Activated naive CD4-positive, alpha-beta T cell treated with anti-CD3 and anti-CD28 coated beads for 36 hours (primary cell): ENCODE measurements at regions of chr6 and their contacts with region 1.

Region 1: DNA sequence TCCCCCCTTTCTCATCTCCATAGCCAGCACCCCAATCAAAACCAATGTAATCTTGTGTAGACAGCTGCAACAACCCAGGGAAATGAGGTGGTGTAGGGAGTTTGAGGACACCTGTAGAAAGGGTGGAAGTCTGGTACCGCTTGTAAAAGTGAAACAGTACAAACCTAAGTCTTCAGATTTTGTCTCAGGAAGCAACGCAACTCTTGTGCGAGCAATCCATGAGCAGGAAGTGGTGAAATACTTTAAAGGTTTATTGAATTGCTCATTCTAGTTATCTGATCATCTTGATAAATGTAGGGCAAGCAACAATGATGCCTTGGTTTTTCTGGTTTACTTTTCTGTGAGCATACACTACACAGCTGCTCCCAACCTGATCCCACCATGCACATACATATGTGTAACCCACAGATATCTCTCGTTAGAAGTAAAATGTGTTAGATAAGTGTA is 71.1 kb upstream of the THEMIS start:
- DNase-seq: peak; percentile 62
- H3K4me3 Mint-ChIP-seq: peak overlapping the region; percentile 72
- H3K27ac Mint-ChIP-seq: peak overlapping the region; percentile 88
- H3K4me1 Mint-ChIP-seq: peaks cover 63% of the 10 kb centered on the region
- H3K27me3 Mint-ChIP-seq: no peaks in the 10 kb centered on the region

Region 2: GRCh38 chr6:127630800-127631199 is 341.2 kb before region 1 on chr6:
- CTCF ChIA-PET with region 1: no interaction called
- intact Hi-C with region 1: no loop called
- DNase-seq: no peak
- H3K4me3 Mint-ChIP-seq: no peak overlapping the region
- H3K27ac Mint-ChIP-seq: no peak overlapping the region
- H3K4me1 Mint-ChIP-seq: no peaks in the 10 kb centered on the region
- H3K27me3 Mint-ChIP-seq: no peaks in the 10 kb centered on the region

Region 3: DNA sequence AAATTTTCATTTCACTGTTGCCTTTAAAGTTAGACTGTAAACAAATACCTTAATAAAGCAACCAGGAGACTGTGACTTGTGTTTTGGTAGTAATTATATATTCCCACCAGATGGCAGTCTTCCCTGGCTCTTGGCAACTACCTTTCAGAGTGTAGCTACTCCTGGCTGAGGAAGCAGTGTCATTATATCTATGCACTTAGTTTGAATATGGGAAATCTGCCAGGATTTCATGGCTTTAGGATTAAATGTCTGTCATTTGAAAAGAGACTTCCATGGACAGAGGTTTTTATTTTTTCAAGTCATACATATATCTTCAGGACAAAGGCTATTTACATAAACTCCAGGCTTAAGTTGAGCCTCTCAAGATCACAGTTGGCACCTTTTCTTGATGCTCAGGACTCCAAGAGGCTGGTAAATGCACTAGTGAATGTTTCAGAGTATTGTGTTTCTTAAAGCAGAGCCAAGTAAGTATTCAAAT is 234.9 kb before region 1 on chr6:
- CTCF ChIA-PET with region 1: interaction called, 4 read pairs
- intact Hi-C with region 1: loop called (anchors 1 kb)
- DNase-seq: peak; percentile 56
- H3K4me3 Mint-ChIP-seq: no peak overlapping the region
- H3K27ac Mint-ChIP-seq: peak overlapping the region; percentile 63
- H3K4me1 Mint-ChIP-seq: peaks cover 52% of the 10 kb centered on the region
- H3K27me3 Mint-ChIP-seq: no peaks in the 10 kb centered on the region

Region 4: GRCh38 chr6:127907960-127908640 is 63.9 kb before region 1 on chr6:
- CTCF ChIA-PET with region 1: no interaction called
- intact Hi-C with region 1: loop called (anchors 1 kb)
- DNase-seq: peak; percentile 60
- H3K4me3 Mint-ChIP-seq: peak overlapping the region; percentile 51
- H3K27ac Mint-ChIP-seq: peak overlapping the region; percentile 77
- H3K4me1 Mint-ChIP-seq: peaks cover 42% of the 10 kb centered on the region
- H3K27me3 Mint-ChIP-seq: no peaks in the 10 kb centered on the region

Region 5: DNA sequence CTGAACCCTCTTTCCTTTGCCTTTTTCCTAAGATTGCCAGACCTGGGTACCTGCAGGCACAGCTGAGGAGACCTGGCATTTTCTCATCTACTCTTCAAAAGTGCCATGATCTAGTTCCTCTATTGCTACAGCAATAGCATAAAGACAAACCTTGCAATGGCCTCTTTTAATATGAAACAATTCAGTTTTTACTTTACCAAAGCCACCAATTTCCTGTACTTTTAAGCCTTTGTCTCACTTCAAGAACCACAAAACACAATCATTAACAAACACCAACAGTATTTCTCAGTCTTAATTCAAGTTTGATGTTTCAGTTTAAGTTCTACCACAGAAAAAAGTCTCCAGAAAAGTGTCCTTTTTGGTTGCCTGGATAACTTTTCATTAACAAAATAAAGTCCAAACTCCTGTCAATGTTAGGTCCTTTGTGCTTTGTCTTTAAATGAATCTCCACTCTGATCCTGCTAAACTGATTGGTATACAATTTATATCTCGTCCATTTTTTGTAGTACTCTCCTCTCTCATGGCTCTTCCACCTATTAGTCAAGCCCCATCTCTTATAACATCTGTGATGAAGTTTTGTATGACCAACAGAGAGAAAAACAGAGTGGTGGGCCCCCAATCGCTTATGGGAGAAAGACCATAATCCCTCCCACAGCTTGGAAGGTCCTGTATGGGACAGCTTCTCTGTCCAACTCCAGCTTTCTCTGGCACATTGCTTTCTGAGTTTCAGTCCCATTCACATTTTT is 20.6 kb before region 1 on chr6:
- CTCF ChIA-PET with region 1: interaction called, 12 read pairs
- intact Hi-C with region 1: loop called (anchors 1 kb)
- DNase-seq: no peak
- H3K4me3 Mint-ChIP-seq: peak overlapping the region; percentile 37
- H3K27ac Mint-ChIP-seq: peak overlapping the region; percentile 66
- H3K4me1 Mint-ChIP-seq: peaks cover 62% of the 10 kb centered on the region
- H3K27me3 Mint-ChIP-seq: no peaks in the 10 kb centered on the region

Region 6: GRCh38 chr6:128327890-128328289 is 355.9 kb after region 1 on chr6:
- CTCF ChIA-PET with region 1: no interaction called
- intact Hi-C with region 1: loop called (anchors 5 kb)
- DNase-seq: peak; percentile 30
- H3K4me3 Mint-ChIP-seq: no peak overlapping the region
- H3K27ac Mint-ChIP-seq: no peak overlapping the region
- H3K4me1 Mint-ChIP-seq: no peaks in the 10 kb centered on the region
- H3K27me3 Mint-ChIP-seq: no peaks in the 10 kb centered on the region